ENCODE measurements at regions of chr1 and their contacts with region 1.

Region 1: DNA sequence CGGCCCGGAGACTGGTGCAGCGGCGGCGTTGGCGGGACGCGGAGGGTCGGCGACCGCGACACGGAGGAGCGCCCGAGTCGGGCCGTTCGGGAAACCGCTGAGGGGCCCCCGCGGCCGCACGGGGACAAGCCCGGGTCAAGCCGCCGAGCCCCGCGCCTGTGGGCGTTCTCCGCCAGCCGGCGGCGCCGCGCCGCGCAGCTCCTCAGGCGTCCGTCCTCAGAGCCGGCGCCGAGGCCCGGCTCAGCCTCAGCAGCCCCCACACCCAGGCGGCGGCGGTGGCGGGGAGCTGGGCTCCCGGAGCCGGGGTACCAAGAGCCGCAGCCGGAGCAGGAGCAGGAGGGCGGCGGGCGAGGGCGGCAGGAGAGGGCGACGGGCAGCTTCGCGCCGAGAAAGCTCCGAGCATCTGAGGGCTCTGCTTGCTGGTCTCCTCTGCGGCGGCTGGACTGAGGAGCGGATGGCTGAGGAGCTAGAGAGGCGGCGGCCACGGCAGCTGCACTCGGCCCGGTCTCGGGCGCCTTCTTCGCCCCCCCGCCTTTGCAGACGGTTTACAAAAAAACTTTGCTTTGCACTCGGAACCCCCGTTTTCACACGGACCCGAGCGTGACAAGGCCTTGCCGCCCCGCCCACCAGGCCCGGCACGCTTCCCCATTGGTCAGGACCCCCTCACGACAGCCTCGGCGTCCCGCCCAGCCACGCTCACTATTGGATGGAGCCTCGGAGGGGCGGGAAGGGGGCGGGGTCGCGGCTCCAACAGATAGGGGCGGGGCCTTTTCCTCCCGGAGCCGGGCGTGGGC is at the start of gene SLC30A1:
- DNase-seq: peak; percentile 100
- ATAC-seq: peak; percentile 96 to 98 (median 98)
- H3K4me3 ChIP-seq: peak within 1 kb of the TSS; percentile 83 to 97 (median 94)
- H3K27ac ChIP-seq: peak within 1 kb of the TSS; percentile 93 to 99 (median 96)
- H3K4me1 ChIP-seq: peaks cover 0 to 72% (median 35%) of the 10 kb centered on the region in 9 donors
- H3K27me3 ChIP-seq: no peaks in the 10 kb centered on the region
- CTCF ChIP-seq: no peak
- total RNA-seq, gene SLC30A1: 8.1 to 26.5 (median 16.1) TPM

Region 2: GRCh38 chr1:211469938-211470529 is 108.8 kb before region 1 on chr1:
- intact Hi-C with region 1: loop called in 1 of 10 experiments (anchors 5 kb)
- DNase-seq: peak; percentile 76 to 78
- ATAC-seq: peak; percentile 77 to 96 (median 92)
- H3K4me3 ChIP-seq: peak overlapping the region in 1 of 10 donors; percentile 20
- H3K27ac ChIP-seq: no peak overlapping the region
- H3K4me1 ChIP-seq: peaks cover 0 to 26% (median 19%) of the 10 kb centered on the region in 9 donors
- H3K27me3 ChIP-seq: peaks cover 0 to 3% (median 0%) of the 10 kb centered on the region in 7 donors
- CTCF ChIP-seq: peak; percentile 61 to 90 (median 86)

Region 3: DNA sequence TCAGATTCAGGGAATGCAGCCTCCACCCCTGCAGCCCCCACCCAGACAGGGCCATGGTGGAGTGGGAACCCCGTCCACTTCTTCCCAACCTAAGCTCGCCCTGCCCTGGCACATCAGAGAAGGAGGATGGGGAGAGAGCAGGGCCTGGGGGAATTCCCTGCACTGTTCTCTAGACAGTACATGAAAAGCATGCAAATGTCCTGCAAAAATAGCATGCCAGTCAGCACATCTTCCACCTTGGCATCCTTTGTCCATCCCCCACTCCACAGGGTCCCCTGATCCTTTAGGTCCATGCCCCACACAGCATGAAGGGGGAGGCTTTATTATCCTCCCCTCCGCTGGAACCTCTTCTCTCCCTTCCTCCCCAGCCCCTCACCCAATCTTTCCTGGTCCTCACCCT is 51.8 kb before region 1 on chr1:
- intact Hi-C with region 1: loop called in 1 of 10 experiments (anchors 10 kb)
- DNase-seq: no peak
- ATAC-seq: no peak
- H3K4me3 ChIP-seq: no peak overlapping the region
- H3K27ac ChIP-seq: peak overlapping the region in 1 of 10 donors; percentile 11
- H3K4me1 ChIP-seq: peaks cover 0 to 52% (median 16%) of the 10 kb centered on the region in 9 donors
- H3K27me3 ChIP-seq: no peaks in the 10 kb centered on the region
- CTCF ChIP-seq: no peak

Region 4: DNA sequence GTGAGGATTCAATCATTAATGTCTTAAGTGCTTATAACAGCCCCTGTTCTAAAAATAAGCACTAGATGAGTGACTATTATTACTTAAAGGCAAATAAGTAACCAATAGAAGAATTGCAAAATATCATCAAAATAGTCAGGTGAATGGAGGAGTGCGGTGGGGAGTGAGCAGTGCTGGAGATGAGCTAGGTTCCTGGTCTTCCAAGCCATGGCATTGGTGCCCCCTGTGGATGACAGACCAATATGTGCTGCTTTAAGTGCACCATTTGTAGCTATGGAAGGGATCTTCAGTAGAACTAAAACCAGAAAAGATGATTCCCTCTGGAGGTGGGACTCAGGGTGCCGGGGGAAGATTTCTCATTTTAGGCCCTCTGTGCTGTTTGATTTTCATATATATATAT is 46.2 kb after region 1 on chr1:
- intact Hi-C with region 1: loop called in 3 of 10 experiments (anchors 1 to 5 kb)
- DNase-seq: no peak
- ATAC-seq: peak in 4 of 8 donors; percentile 57 to 72 (median 68)
- H3K4me3 ChIP-seq: no peak overlapping the region
- H3K27ac ChIP-seq: no peak overlapping the region
- H3K4me1 ChIP-seq: peaks cover 0 to 22% (median 7%) of the 10 kb centered on the region in 9 donors
- H3K27me3 ChIP-seq: no peaks in the 10 kb centered on the region
- CTCF ChIP-seq: peak in 7 of 9 donors; percentile 12 to 48 (median 39)

Region 5: GRCh38 chr1:211648980-211649934 is 70.4 kb after region 1 on chr1:
- intact Hi-C with region 1: loop called in 8 of 10 experiments (anchors 1 to 5 kb)
- DNase-seq: no peak
- ATAC-seq: peak; percentile 63 to 87 (median 85)
- H3K4me3 ChIP-seq: no peak overlapping the region
- H3K27ac ChIP-seq: peak overlapping the region in 1 of 10 donors; percentile 28
- H3K4me1 ChIP-seq: peaks cover 0 to 12% (median 0%) of the 10 kb centered on the region in 9 donors
- H3K27me3 ChIP-seq: no peaks in the 10 kb centered on the region
- CTCF ChIP-seq: peak in 7 of 9 donors; percentile 39 to 77 (median 58)